Activated B cell treated with CpG ODN at 0.5 μM for 24 hours (primary cell): ENCODE measurements at regions of chrX and their contacts with region 1.

Region 1: GRCh38 chrX:16719334-16720084 is at the start of gene SYAP1:
- DNase-seq: peak; percentile 87
- ATAC-seq: peak; percentile 93
- H3K4me3 Mint-ChIP-seq: peak within 1 kb of the TSS; percentile 90
- H3K27ac Mint-ChIP-seq: peak within 1 kb of the TSS; percentile 94
- H3K4me1 Mint-ChIP-seq: peaks cover 15% of the 10 kb centered on the region
- H3K27me3 Mint-ChIP-seq: no peaks in the 10 kb centered on the region
- CTCF ChIP-seq: no peak
- total RNA-seq, gene SYAP1: 14.9 and 16.8 TPM in 2 replicates

Region 2: DNA sequence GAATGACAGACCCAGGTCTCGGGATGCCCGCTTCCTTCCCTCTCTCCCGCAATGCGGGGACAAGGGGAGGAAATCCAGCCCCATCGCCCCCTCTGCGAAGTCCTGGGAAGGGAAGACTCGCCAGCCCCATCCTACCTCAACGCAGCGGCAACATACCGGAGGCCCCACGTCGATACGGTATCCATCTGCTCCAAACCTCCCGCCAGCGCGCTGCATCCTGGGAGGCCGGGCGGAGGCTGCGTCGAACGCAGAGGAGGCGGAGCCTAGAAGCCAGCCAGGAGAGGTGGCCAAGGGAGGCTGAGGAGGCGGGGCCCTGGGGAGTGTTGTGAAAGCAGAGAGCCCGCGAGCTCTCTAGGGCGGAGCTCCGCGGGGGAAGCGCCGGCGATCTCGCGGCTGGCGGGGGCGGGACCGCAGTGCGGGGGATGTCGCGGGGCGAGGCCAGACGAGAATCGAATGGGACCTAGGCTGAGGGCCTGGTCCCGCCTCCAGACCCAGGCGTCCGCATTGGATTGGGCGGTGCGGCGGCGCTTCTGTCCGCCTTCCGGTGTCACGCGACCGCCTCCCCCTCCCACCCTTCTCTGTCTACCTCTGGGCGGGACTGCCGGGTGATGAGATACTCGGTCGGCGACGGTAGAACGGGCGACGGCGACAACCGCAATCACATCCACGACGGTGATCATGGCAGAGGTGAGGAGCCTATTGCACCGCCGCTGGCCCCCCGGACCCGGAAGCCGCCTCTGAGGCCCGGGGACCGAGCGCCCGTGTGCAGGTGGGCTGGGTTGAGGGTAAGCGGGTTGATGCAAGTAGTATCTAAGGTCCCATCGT is 1846.4 kb before region 1 on chrX and contains the starts of genes FANCB and MOSPD2:
- CTCF ChIA-PET with region 1: no interaction called
- POLR2A ChIA-PET with region 1: no interaction called
- intact Hi-C with region 1: loop called (anchors 10 kb)
- DNase-seq: peak; percentile 82
- ATAC-seq: peak; percentile 93
- H3K4me3 Mint-ChIP-seq: peak within 1 kb of the TSS; percentile 87
- H3K27ac Mint-ChIP-seq: peak within 1 kb of the TSS; percentile 83
- H3K4me1 Mint-ChIP-seq: peaks cover 7% of the 10 kb centered on the region
- H3K27me3 Mint-ChIP-seq: no peaks in the 10 kb centered on the region
- CTCF ChIP-seq: no peak
- total RNA-seq, gene FANCB: 3.9 and 4.0 TPM in 2 replicates
- total RNA-seq, gene MOSPD2: 15.6 and 19.7 TPM in 2 replicates

Region 3: DNA sequence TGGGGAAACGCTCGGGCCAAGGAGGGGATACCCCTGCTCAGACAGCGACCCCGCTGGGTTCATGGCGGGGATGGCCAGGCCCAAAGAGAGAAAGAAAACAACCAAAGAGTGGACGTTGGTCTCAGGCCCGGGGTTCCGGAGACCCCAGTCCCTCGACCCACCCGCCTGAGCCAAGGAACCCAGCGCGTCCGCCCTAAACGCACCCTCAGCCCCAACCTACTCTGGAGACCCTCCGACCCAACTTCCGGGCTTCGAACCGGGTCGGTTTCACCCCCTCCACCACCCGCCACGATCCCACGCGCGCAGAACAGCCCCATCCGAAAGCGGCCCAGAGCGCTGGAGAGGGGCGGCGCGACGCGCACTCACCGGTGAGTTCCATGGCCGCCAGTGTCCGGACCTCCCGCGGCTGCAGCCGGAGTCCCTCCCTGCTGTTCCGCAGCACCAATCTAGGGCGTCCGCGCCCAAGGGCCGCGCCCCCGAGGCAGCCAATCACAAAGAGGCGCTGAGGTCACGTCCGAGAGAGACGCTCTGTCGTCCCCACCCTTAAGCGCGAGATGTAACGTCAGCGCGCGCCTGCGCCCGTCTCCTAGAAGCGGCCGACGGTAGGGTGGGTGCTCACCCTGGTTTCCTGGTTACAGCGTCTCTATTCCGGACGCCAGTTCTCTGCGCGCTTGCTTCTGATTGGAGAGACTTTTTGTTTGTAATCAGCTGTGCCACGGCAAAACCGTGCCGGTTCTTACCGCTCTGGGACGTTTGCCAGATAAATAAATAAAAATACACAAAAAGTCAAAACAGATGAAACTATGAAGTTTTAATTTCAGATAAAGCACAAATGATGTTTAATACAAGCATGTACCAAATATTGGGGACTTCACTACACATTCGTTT is 1384.1 kb before region 1 on chrX and contains the start of gene PIGA:
- CTCF ChIA-PET with region 1: no interaction called
- POLR2A ChIA-PET with region 1: no interaction called
- intact Hi-C with region 1: loop called (anchors 10 kb)
- DNase-seq: peak; percentile 77
- ATAC-seq: peak; percentile 94
- H3K4me3 Mint-ChIP-seq: peak within 1 kb of the TSS; percentile 94
- H3K27ac Mint-ChIP-seq: peak within 1 kb of the TSS; percentile 91
- H3K4me1 Mint-ChIP-seq: peaks cover 19% of the 10 kb centered on the region
- H3K27me3 Mint-ChIP-seq: no peaks in the 10 kb centered on the region
- CTCF ChIP-seq: no peak
- total RNA-seq, gene PIGA: 15.7 and 24.9 TPM in 2 replicates

Region 4: GRCh38 chrX:16386126-16386525 is 333.4 kb before region 1 on chrX:
- CTCF ChIA-PET with region 1: no interaction called
- POLR2A ChIA-PET with region 1: no interaction called
- intact Hi-C with region 1: no loop called
- DNase-seq: no peak
- ATAC-seq: no peak
- H3K4me3 Mint-ChIP-seq: no peak overlapping the region
- H3K27ac Mint-ChIP-seq: no peak overlapping the region
- H3K4me1 Mint-ChIP-seq: no peaks in the 10 kb centered on the region
- H3K27me3 Mint-ChIP-seq: no peaks in the 10 kb centered on the region
- CTCF ChIP-seq: no peak

Region 5: DNA sequence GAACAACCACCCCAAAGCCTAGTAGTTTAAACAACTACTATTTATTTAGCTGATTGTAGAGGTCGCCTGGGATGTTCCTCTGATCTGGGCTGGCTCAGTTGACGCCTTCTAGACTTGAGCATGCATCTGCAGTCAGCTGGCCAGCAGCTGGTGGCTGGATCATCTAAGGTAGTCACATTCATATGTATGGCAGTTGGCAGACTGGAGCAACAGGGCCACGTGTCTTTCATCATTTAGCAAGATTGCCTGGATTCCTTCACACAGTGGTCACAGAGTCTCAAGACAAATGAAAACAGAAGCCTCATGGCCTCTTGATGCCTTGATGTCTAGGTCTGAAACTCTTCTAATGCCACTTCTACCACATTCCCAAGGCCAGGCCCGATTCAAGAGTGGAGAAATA is 290.1 kb before region 1 on chrX:
- CTCF ChIA-PET with region 1: no interaction called
- POLR2A ChIA-PET with region 1: no interaction called
- intact Hi-C with region 1: no loop called
- DNase-seq: no peak
- ATAC-seq: no peak
- H3K4me3 Mint-ChIP-seq: no peak overlapping the region
- H3K27ac Mint-ChIP-seq: no peak overlapping the region
- H3K4me1 Mint-ChIP-seq: peaks cover 2% of the 10 kb centered on the region
- H3K27me3 Mint-ChIP-seq: peaks cover 2% of the 10 kb centered on the region
- CTCF ChIP-seq: no peak

Region 6: GRCh38 chrX:16687514-16687913 is 32.0 kb before region 1 on chrX:
- CTCF ChIA-PET with region 1: no interaction called
- POLR2A ChIA-PET with region 1: no interaction called
- intact Hi-C with region 1: no loop called
- DNase-seq: no peak
- ATAC-seq: no peak
- H3K4me3 Mint-ChIP-seq: no peak overlapping the region
- H3K27ac Mint-ChIP-seq: no peak overlapping the region
- H3K4me1 Mint-ChIP-seq: no peaks in the 10 kb centered on the region
- H3K27me3 Mint-ChIP-seq: no peaks in the 10 kb centered on the region
- CTCF ChIP-seq: no peak

Region 7: GRCh38 chrX:16786139-16786790 is 66.8 kb after region 1 on chrX and contains the start of gene TXLNG:
- CTCF ChIA-PET with region 1: no interaction called
- POLR2A ChIA-PET with region 1: interaction called, 3 read pairs
- intact Hi-C with region 1: loop called (anchors 1 kb)
- DNase-seq: peak; percentile 81
- ATAC-seq: peak; percentile 95
- H3K4me3 Mint-ChIP-seq: peak within 1 kb of the TSS; percentile 97
- H3K27ac Mint-ChIP-seq: peak within 1 kb of the TSS; percentile 90
- H3K4me1 Mint-ChIP-seq: peaks cover 18% of the 10 kb centered on the region
- H3K27me3 Mint-ChIP-seq: no peaks in the 10 kb centered on the region
- CTCF ChIP-seq: no peak
- total RNA-seq, gene TXLNG: 12.7 and 13.1 TPM in 2 replicates

Region 8: DNA sequence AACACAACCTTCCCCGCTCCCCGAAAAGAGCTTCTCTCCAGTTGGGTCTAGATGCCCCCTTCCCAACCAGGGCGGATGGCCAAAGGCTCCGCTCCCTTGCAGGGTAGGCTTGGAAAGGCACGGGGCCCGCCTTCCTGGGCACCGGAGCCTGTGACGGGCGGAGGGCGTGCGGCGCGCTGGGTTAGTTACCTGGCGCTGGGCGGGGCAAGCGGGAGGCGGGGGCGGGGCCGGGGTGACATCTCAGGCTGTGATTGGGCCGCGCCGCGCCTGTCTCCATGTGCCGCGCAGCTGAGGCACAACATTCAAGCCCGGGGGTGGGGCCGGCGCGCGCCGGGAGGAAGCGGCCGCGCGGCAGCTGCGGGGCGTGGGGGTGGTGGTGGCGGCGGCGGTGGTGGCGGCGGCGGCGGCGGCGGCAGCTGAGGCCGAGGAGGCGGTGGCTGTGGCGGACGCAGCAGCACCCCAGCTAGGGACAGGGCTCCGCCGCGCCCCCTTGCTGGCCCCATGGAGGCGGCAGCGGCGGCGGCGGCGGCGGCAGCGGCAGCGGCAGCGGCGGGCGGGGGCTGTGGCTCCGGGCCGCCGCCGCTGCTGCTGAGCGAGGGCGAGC is 227.0 kb after region 1 on chrX and contains the start of gene REPS2:
- CTCF ChIA-PET with region 1: no interaction called
- POLR2A ChIA-PET with region 1: no interaction called
- intact Hi-C with region 1: loop called (anchors 10 kb)
- DNase-seq: peak; percentile 57
- ATAC-seq: peak; percentile 98
- H3K4me3 Mint-ChIP-seq: peak within 1 kb of the TSS; percentile 86
- H3K27ac Mint-ChIP-seq: peak within 1 kb of the TSS; percentile 59
- H3K4me1 Mint-ChIP-seq: peaks cover 10% of the 10 kb centered on the region
- H3K27me3 Mint-ChIP-seq: no peaks in the 10 kb centered on the region
- CTCF ChIP-seq: no peak
- total RNA-seq, gene REPS2: 1.6 and 2.0 TPM in 2 replicates

Region 9: DNA sequence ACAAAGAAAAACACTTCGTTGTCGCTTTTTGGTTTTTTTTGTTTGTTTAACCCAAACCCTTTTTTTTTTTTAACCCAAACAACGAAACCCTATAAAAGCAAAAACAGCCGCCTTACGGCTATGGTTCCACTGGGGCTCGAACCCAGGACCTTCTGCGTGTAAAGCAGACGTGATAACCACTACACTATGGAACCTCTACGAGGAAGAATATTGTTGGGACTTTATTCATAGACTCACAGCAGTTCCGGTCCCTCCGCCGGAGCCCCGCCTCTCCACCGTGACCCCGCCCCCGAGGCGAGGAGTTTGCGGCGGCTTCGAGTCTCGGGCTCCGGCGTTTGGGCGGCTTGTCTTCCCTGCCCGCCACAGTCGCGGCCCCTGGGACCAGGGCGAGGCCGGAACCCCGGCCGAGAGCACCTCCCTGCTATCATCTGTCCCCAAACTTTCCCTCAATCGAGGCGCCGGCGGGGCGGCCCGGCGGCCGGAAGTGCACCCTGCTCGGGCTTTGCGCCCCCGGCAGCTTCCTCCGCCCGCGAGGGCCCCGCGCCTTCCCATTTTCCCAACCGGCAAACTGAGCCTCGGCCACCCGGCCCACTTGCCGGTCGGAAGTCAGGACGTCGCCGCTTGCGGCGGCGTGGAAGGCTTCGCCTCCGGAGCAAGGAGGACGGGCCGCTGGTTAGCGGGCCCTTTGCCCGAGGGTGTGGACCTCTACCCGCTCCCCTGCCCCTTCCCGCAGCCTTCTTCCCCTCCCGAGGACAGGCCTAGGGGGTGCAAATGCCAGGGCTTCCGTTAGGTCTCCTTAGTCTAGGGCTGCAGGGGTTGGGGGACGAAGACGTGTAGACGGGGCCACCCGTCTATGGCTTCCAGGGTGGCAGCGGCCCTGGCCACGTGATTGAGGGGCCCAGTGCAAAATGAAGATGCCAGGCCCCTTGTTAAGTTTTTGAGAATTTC is 1955.6 kb after region 1 on chrX:
- CTCF ChIA-PET with region 1: no interaction called
- POLR2A ChIA-PET with region 1: no interaction called
- intact Hi-C with region 1: loop called (anchors 5 kb)
- DNase-seq: peak; percentile 75
- ATAC-seq: peak; percentile 88
- H3K4me3 Mint-ChIP-seq: peak overlapping the region; percentile 82
- H3K27ac Mint-ChIP-seq: peak overlapping the region; percentile 85
- H3K4me1 Mint-ChIP-seq: peaks cover 12% of the 10 kb centered on the region
- H3K27me3 Mint-ChIP-seq: no peaks in the 10 kb centered on the region
- CTCF ChIP-seq: no peak